H1 (cell line): ENCODE measurements at regions of chr16 and their contacts with region 1.

Region 1: DNA sequence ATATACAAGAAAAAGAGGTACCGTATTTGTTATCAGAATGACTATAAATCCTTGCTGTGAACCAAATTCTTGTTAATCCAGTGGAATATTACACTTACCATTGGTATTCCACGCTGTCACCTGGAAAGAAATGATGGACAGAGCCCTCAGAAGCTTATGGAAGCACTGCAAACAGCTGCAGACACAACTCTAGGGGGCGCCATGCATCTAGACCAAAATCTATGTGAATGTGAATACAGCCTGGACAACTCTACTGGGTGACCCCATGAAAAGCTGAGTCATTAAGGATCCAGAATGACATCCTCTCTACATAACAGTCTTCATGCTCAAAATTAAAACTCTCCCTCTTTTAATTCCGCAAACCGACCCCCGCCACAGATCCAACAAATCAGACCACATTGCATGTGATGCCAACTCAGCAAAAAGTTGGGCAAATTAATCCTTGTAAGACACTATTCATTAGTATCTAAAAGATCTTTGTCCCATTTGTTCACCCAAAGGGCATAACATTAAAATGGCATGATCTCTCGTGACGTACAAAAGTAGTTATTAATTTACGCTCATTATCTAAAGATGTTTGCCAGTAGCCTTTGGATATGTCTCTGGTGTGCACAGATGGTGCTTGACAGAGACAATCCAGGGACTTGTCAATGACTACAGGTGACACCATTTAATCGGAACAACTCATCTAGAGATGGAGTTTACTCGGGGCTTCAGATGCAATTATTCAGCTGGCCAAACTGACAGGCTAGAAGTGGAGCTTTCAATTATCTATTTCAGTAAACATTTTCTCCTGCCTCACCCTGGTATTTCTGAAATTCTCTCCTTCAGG is 552.7 kb upstream of the PSMD7 start:
- DNase-seq: peak in 1 of 2 experiments; percentile 55
- H3K4me3 ChIP-seq: no peak overlapping the region
- H3K27ac ChIP-seq: no peak overlapping the region
- H3K4me1 ChIP-seq: no peaks in the 10 kb centered on the region
- H3K27me3 ChIP-seq: no peaks in the 10 kb centered on the region
- CTCF ChIP-seq: peak; percentile 31 to 71 (median 47)
- EP300 ChIP-seq: no peak
- POLR2A ChIP-seq: no peak
- RAD21 ChIP-seq: peak; percentile 68 to 76

Region 2: GRCh38 chr16:73565262-73565661 is 178.6 kb before region 1 on chr16:
- CTCF ChIA-PET with region 1: interaction called, 11 read pairs
- POLR2A ChIA-PET with region 1: no interaction called
- DNase-seq: no peak
- H3K4me3 ChIP-seq: no peak overlapping the region
- H3K27ac ChIP-seq: no peak overlapping the region
- H3K4me1 ChIP-seq: peaks cover 0 to 8% (median under 1%) of the 10 kb centered on the region in 4 experiments; a peak in 2 of 7 replicates
- H3K27me3 ChIP-seq: no peaks in the 10 kb centered on the region; a peak in 1 of 7 replicates
- CTCF ChIP-seq: peak in 2 of 3 experiments; percentile 42 to 45; a peak in 2 of 4 replicates
- EP300 ChIP-seq: no peak
- POLR2A ChIP-seq: no peak
- RAD21 ChIP-seq: peak; percentile 76 to 84

Region 3: GRCh38 chr16:73725156-73725555 is 18.7 kb before region 1 on chr16:
- CTCF ChIA-PET with region 1: interaction called, 10 read pairs
- POLR2A ChIA-PET with region 1: no interaction called
- DNase-seq: no peak
- H3K4me3 ChIP-seq: no peak overlapping the region
- H3K27ac ChIP-seq: no peak overlapping the region
- H3K4me1 ChIP-seq: no peaks in the 10 kb centered on the region
- H3K27me3 ChIP-seq: no peaks in the 10 kb centered on the region
- CTCF ChIP-seq: no peak
- EP300 ChIP-seq: no peak
- POLR2A ChIP-seq: no peak
- RAD21 ChIP-seq: no peak

Region 4: GRCh38 chr16:73753931-73754330 is 10.1 kb after region 1 on chr16:
- CTCF ChIA-PET with region 1: interaction called, 28 read pairs
- POLR2A ChIA-PET with region 1: no interaction called
- DNase-seq: no peak
- H3K4me3 ChIP-seq: no peak overlapping the region
- H3K27ac ChIP-seq: no peak overlapping the region
- H3K4me1 ChIP-seq: no peaks in the 10 kb centered on the region
- H3K27me3 ChIP-seq: no peaks in the 10 kb centered on the region
- CTCF ChIP-seq: no peak
- EP300 ChIP-seq: no peak
- POLR2A ChIP-seq: no peak
- RAD21 ChIP-seq: no peak

Region 5: DNA sequence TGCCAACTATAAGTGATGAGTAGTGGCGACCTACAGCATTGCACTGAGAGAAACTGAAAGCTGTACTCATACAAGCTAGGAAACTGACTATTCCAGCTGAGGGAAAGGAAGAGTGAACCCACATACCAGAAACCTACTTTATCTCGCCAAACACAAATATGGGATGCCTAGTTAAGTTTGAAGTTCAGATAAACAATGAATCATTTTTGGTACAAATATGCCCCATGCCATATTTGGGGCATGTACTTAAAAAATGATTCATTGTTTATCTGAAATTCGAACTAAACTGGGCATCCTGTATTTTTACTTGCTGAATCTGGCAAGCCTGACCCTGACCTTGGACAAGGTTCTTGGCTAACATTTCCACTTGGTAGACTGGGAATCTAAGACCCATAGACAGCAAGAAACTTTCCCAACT is 24.9 kb after region 1 on chr16:
- CTCF ChIA-PET with region 1: interaction called, 13 read pairs
- POLR2A ChIA-PET with region 1: no interaction called
- DNase-seq: no peak
- H3K4me3 ChIP-seq: no peak overlapping the region
- H3K27ac ChIP-seq: no peak overlapping the region
- H3K4me1 ChIP-seq: no peaks in the 10 kb centered on the region
- H3K27me3 ChIP-seq: no peaks in the 10 kb centered on the region
- CTCF ChIP-seq: no peak
- EP300 ChIP-seq: no peak
- POLR2A ChIP-seq: no peak
- RAD21 ChIP-seq: no peak

Region 6: GRCh38 chr16:73846356-73846755 is 102.5 kb after region 1 on chr16:
- CTCF ChIA-PET with region 1: interaction called, 11 read pairs
- POLR2A ChIA-PET with region 1: no interaction called
- DNase-seq: peak in 1 of 2 experiments; percentile 47
- H3K4me3 ChIP-seq: no peak overlapping the region
- H3K27ac ChIP-seq: no peak overlapping the region
- H3K4me1 ChIP-seq: no peaks in the 10 kb centered on the region
- H3K27me3 ChIP-seq: no peaks in the 10 kb centered on the region
- CTCF ChIP-seq: peak; percentile 35 to 62 (median 44)
- EP300 ChIP-seq: no peak
- POLR2A ChIP-seq: no peak
- RAD21 ChIP-seq: peak; percentile 63 to 68

Region 7: DNA sequence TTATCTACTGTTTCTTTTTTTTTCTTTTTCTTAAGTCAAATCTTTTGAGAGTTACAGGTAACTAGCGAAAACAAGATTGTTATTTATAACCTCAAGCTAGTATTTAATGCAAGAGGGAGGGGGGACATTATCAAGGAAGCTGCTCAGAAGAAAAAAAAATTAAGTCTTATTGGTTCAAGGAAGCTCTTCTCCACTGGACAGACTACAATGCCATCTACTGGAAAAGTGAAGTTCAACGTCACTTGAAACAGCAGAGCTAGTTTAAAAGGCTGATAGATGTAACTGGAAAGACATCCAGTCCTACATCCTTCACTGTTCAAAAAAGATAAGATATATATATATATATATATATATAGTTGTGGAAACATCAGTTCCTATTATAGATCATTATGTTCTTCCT is 134.7 kb after region 1 on chr16:
- CTCF ChIA-PET with region 1: interaction called, 11 read pairs
- POLR2A ChIA-PET with region 1: no interaction called
- DNase-seq: no peak
- H3K4me3 ChIP-seq: no peak overlapping the region
- H3K27ac ChIP-seq: no peak overlapping the region
- H3K4me1 ChIP-seq: peaks cover 0 to 4% (median 1%) of the 10 kb centered on the region in 4 experiments; a peak in 3 of 7 replicates
- H3K27me3 ChIP-seq: no peaks in the 10 kb centered on the region
- CTCF ChIP-seq: peak in 2 of 3 experiments; percentile 31 to 56; a peak in 2 of 4 replicates
- EP300 ChIP-seq: no peak
- POLR2A ChIP-seq: no peak
- RAD21 ChIP-seq: peak; percentile 82 to 87